GM13977 (cell line): ENCODE measurements at regions of chr6 and their contacts with region 1.

Region 1: DNA sequence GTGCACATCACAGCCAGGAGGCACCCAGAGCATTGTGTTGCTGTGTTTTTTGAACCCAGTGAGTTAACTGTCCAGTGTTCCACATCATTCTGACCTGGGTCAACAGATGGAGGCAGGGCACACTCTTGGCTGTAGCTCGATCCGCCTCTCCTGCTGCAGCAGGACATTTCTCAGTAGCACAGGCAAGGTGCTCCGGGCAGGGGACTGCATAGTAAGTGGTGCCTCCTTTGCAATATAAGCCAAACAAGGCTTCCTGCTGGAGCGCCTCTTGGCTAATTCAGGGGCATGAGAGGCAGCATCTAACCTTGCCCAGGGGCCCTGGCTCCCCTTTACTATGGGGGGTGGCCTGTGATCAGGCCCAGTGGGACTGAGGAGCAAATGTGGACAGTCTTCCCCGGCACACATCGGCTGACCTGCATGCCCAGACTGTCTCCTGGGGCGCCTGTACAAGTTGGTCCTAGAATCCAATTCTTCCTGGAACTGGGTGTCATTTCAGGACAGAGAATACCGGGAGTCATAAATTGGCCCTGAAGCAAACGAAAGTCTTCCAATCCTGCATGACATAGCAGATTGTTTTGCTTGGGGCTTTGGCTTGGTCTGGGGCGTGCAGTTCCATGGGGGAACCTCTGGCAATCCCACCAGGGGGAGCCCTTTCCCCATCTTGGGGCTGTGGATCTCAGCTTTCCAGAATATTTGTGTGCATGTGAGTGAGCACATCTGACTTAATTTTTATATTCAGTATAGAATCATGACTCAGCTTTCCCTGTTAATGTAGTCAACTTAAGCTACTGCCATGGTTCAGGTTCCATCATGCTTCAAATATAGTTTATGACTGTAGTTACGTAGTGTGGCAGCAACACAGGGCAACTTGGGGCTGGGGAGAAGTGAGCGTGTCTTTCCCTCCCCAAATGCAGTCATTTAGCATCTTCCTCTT is 56.0 kb upstream of the DDR1 start:
- DNase-seq: peak; percentile 62
- CTCF ChIP-seq: peak; percentile 81

Region 2: DNA sequence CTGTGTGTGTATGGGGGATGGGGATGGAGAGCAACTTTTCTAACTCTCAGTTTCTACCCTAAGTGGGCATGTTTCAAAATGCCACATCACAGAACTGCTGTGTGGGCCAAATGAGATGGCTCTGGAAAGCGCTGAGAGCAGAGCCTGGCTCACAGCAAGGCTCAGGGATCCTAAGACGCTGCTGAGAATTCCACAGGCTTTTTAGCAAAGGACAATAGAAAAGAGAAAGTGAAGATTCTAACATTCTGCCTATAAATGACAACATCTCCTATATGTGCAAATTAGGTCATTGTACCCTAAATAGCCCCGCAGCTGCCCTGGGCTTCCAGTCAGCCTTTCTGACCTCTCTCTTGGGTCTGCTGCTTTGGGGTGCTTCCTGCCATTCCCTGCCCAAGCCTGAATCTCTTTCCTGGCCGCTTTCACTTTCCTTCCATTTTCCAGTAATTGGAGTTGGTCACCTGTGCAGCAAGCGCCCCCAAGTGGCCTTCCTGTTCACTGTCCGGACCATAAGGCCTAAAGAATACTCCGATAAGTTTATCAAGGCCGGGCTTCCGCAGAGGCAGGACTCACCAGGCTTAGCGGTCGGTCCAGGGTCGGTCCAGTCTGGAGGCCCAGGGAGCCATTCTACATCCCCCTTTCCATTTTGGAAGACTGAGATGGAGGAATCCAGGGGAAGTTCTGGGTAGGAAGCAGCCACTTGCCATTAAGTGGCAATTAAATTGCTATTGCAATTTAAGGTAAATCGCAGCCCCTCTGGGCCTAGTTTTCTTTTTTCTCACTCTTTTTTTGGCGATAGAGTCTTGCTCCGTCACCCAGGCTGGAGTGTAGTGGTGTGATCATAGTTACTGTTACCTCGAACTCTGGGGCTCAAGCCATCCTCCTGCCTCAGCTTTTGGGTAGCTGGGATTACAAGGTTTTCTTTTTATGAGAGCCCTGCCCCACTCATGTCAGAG is 49.4 kb after region 1 on chr6:
- in situ Hi-C with region 1: loop called (anchors 10 kb)
- DNase-seq: peak; percentile 80
- CTCF ChIP-seq: peak; percentile 91

Region 3: DNA sequence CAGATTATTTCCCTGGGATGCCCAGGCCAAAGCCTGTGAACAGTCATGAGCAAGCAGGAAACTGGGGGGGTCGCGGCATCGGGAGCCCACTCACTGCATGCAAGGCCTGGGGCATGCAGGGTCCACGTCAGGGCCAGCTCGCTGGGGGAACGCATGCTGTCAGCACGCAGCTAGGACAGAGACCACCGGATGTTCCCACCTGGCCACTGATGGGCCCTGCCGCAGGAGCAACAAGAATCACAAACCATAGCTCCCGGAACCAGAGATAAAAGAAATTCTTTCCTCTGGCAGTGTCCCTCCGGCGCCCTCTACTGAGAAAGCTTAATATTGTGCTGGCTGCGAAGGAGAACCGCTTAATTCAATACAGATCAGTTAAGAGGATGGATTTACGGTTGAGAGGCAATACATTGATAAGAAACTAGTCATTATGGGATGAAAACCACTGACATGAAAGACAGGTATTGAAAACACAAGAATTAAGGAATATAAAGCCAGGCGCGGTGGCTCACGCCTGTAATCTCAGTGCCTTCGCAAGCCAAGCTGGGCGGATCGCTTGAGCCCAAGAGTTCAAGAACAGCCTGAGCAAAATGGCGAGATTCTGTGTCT is 251.5 kb after region 1 on chr6:
- in situ Hi-C with region 1: loop called (anchors 10 kb)
- DNase-seq: peak; percentile 65
- CTCF ChIP-seq: peak; percentile 85